ENCODE measurements at regions of chr9 and their contacts with region 1.

Region 1: GRCh38 chr9:97411789-97412625 is at the start of gene TDRD7:
- DNase-seq: peak; percentile 92 to 97
- ATAC-seq: peak; percentile 95
- H3K4me3 ChIP-seq: peak within 1 kb of the TSS; percentile 86 to 87
- H3K27ac ChIP-seq: peak within 1 kb of the TSS in 1 of 2 donors; percentile 8
- H3K4me1 ChIP-seq: no peaks in the 10 kb centered on the region
- H3K27me3 ChIP-seq: no peaks in the 10 kb centered on the region
- total RNA-seq, gene TDRD7: 17.0 to 17.6 TPM

Region 2: GRCh38 chr9:96854073-96854876 is 557.7 kb before region 1 on chr9 and contains the start of gene ZNF782:
- intact Hi-C with region 1: loop called in 1 of 2 experiments (anchors 5 kb)
- DNase-seq: peak; percentile 94 to 96
- ATAC-seq: peak; percentile 97
- H3K4me3 ChIP-seq: peak within 1 kb of the TSS; percentile 23 to 92
- H3K27ac ChIP-seq: peak within 1 kb of the TSS in 1 of 2 donors; percentile 1
- H3K4me1 ChIP-seq: peaks cover 0 to 3% of the 10 kb centered on the region in 2 donors
- H3K27me3 ChIP-seq: no peaks in the 10 kb centered on the region
- total RNA-seq, gene ZNF782: 6.7 to 9.5 TPM

Region 3: GRCh38 chr9:97372580-97372979 is 39.4 kb before region 1 on chr9:
- intact Hi-C with region 1: no loop called
- DNase-seq: no peak
- ATAC-seq: no peak
- H3K4me3 ChIP-seq: no peak overlapping the region
- H3K27ac ChIP-seq: no peak overlapping the region
- H3K4me1 ChIP-seq: no peaks in the 10 kb centered on the region
- H3K27me3 ChIP-seq: no peaks in the 10 kb centered on the region

Region 4: DNA sequence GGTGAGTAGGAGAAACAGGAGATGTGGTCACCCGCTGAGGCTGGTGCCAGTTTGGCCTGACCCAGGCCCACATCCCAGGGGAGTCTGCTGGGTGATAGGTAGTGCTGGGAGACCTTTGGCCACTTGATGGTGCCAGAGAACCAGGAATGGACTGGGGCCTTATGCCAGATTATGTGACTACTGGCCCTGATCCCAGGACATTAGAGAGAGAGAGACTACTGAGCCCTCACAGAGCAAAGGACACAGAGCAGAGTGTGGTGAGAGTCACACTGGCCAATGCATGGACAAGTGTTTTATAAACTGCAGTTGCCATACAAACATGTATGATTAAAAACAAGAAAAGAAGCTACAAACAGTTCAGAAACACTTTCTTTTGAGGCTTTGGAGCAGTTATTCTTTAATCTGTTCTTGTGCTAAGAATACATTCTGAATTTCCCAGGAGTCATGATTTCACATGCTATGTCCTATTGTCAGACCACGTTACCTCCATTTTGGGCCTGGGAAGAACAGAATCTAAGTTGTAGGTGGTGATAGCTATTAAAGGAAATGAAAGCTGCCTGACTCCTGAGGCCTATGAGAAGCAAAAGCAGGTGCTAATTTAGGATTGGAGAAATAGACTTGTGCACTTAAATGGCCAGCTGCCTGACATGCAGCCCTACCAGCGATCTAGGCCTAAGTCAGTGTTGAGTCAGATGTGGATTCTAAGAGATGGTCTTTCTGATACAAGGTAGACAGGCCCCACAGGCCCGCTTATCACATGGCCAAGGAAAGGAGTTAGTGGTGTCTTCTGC is 56.8 kb after region 1 on chr9:
- intact Hi-C with region 1: loop called in 1 of 2 experiments (anchors 10 kb)
- DNase-seq: peak; percentile 74 to 88
- ATAC-seq: peak; percentile 97
- H3K4me3 ChIP-seq: no peak overlapping the region
- H3K27ac ChIP-seq: peak overlapping the region in 1 of 2 donors; percentile 69
- H3K4me1 ChIP-seq: peaks cover 0 to 2% of the 10 kb centered on the region in 2 donors
- H3K27me3 ChIP-seq: no peaks in the 10 kb centered on the region

Region 5: GRCh38 chr9:97632985-97633858 is 221.2 kb after region 1 on chr9 and contains the starts of genes NCBP1 and TSTD2:
- intact Hi-C with region 1: no loop called
- DNase-seq: peak; percentile 98 to 99
- ATAC-seq: peak; percentile 98
- H3K4me3 ChIP-seq: peak within 1 kb of the TSS; percentile 61 to 94
- H3K27ac ChIP-seq: peak within 1 kb of the TSS; percentile 95 to 96
- H3K4me1 ChIP-seq: peaks cover 0 to 10% of the 10 kb centered on the region in 2 donors
- H3K27me3 ChIP-seq: no peaks in the 10 kb centered on the region
- total RNA-seq, gene NCBP1: 23.1 to 24.0 TPM
- total RNA-seq, gene TSTD2: 22.7 to 27.2 TPM